ENCODE measurements at regions of chr12 and their contacts with region 1.

Region 1: DNA sequence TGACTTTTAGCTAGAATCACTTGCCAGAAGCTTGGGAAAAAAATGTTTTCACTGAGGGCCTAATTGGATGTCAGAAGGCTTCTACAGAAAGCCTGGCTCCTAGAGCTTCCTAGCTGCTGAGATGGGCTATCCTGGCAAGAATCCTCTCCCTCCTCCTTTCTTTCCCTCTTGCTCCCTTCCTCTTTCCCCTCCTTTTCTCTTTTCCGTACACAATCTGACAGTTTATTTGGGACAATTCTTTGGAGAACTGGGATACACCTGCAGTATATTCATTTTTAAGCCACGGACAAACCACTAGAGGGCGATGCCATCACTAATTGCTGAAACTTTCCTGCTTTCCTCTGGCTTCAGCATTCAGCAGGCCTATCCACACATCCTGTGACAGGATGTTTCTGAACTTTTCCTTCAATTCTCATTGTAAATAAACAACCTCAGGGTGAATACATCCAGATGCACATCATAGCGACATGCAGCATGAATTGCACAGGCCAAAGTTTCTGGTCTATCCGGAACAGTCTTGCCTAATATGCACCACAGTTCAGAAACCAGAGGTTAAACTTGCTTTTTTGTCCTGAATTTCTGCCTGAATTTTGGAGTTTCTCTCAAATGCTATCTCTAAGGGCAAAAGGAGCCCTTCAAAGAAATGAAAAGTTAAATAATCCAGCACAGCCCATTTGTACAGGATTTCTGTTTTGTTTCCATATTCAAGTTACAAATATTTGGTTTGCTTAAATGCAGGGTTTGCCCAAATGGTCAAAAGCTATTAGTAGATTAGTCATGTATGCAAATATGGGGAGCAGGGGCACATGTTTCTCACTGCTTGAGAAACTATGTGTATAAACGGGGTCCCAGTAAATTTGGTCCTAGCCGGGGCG is 142.8 kb downstream of the PAWR start:
- DNase-seq: peak; percentile 47
- H3K4me3 ChIP-seq: no peak overlapping the region
- H3K27ac ChIP-seq: peak overlapping the region; percentile 53
- H3K4me1 ChIP-seq: peaks cover 14% of the 10 kb centered on the region
- H3K27me3 ChIP-seq: no peaks in the 10 kb centered on the region
- CTCF ChIP-seq: peak in 3 of 4 experiments; percentile 58 to 66 (median 62)
- POLR2A ChIP-seq: no peak

Region 2: GRCh38 chr12:79414261-79414722 is 133.7 kb before region 1 on chr12:
- intact Hi-C with region 1: loop called (anchors 5 kb)
- DNase-seq: no peak
- H3K4me3 ChIP-seq: no peak overlapping the region
- H3K27ac ChIP-seq: peak overlapping the region; percentile 33 to 35
- H3K4me1 ChIP-seq: peaks cover 8% of the 10 kb centered on the region
- H3K27me3 ChIP-seq: no peaks in the 10 kb centered on the region
- CTCF ChIP-seq: no peak
- POLR2A ChIP-seq: no peak

Region 3: DNA sequence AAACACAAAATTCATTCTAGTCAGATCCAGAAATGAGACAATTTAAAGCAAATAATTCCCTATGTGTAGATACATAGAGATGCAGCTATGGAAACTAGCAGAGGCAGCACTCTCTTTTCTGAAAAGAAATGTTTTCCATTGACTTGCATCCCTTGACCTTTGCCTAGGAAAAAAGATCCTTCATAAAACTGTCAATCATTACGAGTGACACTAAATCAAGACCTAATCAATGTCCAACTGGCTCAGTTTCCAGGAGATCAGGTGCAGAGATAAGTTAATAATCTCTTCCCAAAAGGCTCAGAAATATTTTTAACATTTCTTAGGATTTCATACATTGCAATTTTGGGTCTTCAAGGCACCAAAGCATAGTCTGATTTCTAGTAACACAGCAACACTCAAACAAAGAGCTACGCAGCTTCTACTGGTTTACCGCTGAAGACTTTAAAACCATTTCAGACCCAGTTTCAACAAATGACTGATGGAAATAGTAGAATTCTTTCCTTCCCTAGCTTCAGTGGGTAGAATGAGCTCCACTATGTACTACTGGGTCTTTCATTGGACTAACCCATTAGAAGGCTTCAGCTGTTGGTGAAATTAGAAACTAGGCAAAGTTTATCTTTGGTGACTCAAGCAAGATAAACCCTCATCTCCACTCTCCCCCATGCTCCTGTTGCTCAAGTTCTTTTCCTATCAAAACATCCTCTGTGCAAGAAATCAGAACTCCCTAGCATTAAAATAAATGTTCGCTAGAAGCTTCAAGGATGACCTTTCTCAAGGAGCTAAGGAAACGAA is 16.7 kb before region 1 on chr12:
- intact Hi-C with region 1: no loop called
- DNase-seq: no peak
- H3K4me3 ChIP-seq: no peak overlapping the region
- H3K27ac ChIP-seq: no peak overlapping the region
- H3K4me1 ChIP-seq: no peaks in the 10 kb centered on the region
- H3K27me3 ChIP-seq: no peaks in the 10 kb centered on the region
- CTCF ChIP-seq: no peak
- POLR2A ChIP-seq: no peak